ENCODE measurements at regions of chr14 and their contacts with region 1.

Region 1: GRCh38 chr14:60164712-60165546 is at the start of gene DHRS7:
- DNase-seq: peak; percentile 92 to 94
- ATAC-seq: peak; percentile 98
- H3K4me3 ChIP-seq: peak within 1 kb of the TSS; percentile 73 to 79
- H3K27ac ChIP-seq: peak within 1 kb of the TSS; percentile 93 to 94
- H3K4me1 ChIP-seq: peaks cover 0 to 2% of the 10 kb centered on the region in 2 donors
- H3K27me3 ChIP-seq: no peaks in the 10 kb centered on the region
- total RNA-seq, gene DHRS7: 68.2 to 75.3 TPM

Region 2: GRCh38 chr14:60064491-60065072 is 100.3 kb before region 1 on chr14:
- intact Hi-C with region 1: loop called (anchors 5 kb)
- DNase-seq: no peak
- ATAC-seq: no peak
- H3K4me3 ChIP-seq: no peak overlapping the region
- H3K27ac ChIP-seq: no peak overlapping the region
- H3K4me1 ChIP-seq: no peaks in the 10 kb centered on the region
- H3K27me3 ChIP-seq: no peaks in the 10 kb centered on the region

Region 3: DNA sequence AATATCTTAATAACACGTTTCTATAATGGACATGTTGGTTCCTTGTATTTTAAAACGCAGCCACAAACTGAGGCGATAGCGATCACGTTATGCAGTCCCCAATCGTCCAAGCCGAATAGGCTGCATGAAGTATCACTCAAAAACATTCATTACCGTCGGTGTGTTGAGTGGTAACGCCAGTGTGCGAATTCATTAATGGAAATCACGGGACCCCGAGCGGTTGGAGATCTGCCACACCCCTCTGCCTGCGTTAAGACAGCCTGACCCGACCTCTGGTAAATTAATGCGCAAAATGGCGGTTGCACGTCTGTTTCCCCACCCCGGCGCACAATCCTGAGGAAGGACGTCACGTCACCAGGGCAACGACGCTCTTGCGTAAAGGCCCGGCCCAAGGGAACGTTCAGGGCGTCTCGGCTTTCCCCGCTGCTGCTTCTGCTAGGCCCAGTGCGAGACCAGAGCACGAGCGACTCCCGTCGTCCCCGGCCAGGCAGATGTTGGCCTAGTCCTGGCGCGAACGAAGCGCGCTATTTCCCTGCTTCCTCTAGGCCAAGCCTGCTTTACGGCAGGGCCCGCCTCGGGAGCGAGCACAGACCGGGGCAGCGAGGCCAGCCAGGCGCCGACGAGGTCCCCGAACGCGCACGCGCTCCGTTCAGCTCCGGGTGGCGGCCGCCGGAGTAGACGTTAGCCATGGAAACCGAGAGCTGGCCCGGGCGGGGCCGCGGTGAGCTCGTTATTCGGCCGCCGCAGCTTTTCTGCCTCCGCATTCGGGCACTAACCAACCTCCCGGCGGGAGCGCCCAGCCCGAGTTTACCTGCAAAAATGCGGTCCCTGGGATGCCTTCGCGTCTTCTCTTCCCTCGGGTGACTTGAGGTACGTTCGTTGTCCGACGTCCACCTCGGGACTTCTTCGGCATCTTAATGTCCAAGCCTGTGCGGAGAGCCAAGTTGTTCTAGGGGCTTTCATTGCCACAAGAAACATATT is 73.1 kb before region 1 on chr14 and contains the start of gene PCNX4:
- intact Hi-C with region 1: loop called (anchors 1 to 5 kb)
- DNase-seq: peak; percentile 97 to 98
- ATAC-seq: peak; percentile 100
- H3K4me3 ChIP-seq: peak within 1 kb of the TSS; percentile 46 to 92
- H3K27ac ChIP-seq: peak within 1 kb of the TSS; percentile 6 to 49
- H3K4me1 ChIP-seq: no peaks in the 10 kb centered on the region
- H3K27me3 ChIP-seq: no peaks in the 10 kb centered on the region
- total RNA-seq, gene PCNX4: 41.2 to 49.7 TPM

Region 4: GRCh38 chr14:60106339-60106738 is 58.6 kb before region 1 on chr14:
- intact Hi-C with region 1: loop called in 1 of 2 experiments (anchors 5 kb)
- DNase-seq: peak in 1 of 2 donors; percentile 46
- ATAC-seq: no peak
- H3K4me3 ChIP-seq: no peak overlapping the region
- H3K27ac ChIP-seq: no peak overlapping the region
- H3K4me1 ChIP-seq: peaks cover 0 to 2% of the 10 kb centered on the region in 2 donors
- H3K27me3 ChIP-seq: no peaks in the 10 kb centered on the region

Region 5: GRCh38 chr14:60248697-60249318 is 83.9 kb after region 1 on chr14 and contains the start of gene PPM1A:
- intact Hi-C with region 1: loop called in 1 of 2 experiments (anchors 5 kb)
- DNase-seq: peak; percentile 97 to 99
- ATAC-seq: peak; percentile 98
- H3K4me3 ChIP-seq: peak within 1 kb of the TSS; percentile 99 to 100
- H3K27ac ChIP-seq: peak within 1 kb of the TSS; percentile 99
- H3K4me1 ChIP-seq: peaks cover 4 to 5% of the 10 kb centered on the region in 2 donors
- H3K27me3 ChIP-seq: no peaks in the 10 kb centered on the region
- total RNA-seq, gene PPM1A: 61.8 to 63.7 TPM

Measured in aorta (tissue), 5 donors.